ENCODE measurements at regions of chr20 and their contacts with region 1.

Region 1: GRCh38 chr20:58054780-58055373 is 173.6 kb downstream of the ANKRD60 start:
- DNase-seq: peak; percentile 51 to 83
- H3K4me3 ChIP-seq: no peak overlapping the region
- H3K27ac ChIP-seq: peak overlapping the region; percentile 64 to 78
- H3K4me1 ChIP-seq: peaks cover 4 to 7% of the 10 kb centered on the region in 2 donors
- H3K27me3 ChIP-seq: no peaks in the 10 kb centered on the region
- CTCF ChIP-seq: no peak
- POLR2A ChIP-seq: no peak

Region 2: DNA sequence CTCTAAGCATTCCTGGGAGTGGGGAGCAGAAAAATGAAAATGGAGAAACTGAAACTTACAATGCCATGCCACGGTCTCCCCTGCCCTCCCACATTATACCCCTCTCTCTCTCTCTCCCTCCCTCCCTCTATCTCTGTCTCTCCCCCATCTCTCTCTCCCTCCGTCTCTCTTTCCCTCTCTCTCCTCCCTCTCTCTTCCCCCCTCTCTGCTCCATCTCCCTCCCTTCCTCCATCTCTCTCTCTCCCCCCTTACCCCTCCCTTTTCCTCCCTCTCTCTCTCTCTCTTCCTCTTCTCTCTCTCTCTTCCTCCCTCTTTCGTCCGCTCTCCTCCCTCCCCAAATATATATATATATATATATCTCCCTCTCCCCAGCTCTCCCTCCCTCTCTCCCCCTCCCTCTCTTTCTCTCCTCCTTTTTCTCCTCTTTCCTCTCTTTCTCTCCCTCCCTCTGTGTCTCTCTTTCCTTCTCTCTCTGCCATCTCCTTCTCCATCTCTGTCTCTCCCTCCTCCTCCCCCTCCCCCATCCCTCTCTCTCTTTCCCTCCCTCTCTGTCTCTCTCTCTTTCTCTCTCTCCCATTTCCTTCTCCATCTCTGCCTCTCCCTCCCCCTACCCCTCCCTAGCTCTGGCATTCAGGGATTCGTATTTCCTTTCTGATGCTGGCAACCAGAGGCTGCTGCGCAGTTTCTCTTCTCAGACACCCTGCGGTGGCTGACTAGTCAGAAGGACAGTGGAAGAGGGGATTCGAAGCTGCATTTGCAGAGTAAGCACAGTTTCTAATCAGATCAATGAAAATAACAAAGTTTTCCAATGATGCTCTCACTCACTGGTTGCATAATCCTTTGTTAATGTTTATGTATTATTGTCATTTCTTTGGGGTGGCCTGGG is 320.3 kb after region 1 on chr20:
- intact Hi-C with region 1: loop called (anchors 10 kb)
- DNase-seq: no peak
- H3K4me3 ChIP-seq: no peak overlapping the region
- H3K27ac ChIP-seq: no peak overlapping the region
- H3K4me1 ChIP-seq: no peaks in the 10 kb centered on the region
- H3K27me3 ChIP-seq: no peaks in the 10 kb centered on the region
- CTCF ChIP-seq: no peak
- POLR2A ChIP-seq: no peak